ENCODE measurements at regions of chr1 and their contacts with region 1.

Region 1: DNA sequence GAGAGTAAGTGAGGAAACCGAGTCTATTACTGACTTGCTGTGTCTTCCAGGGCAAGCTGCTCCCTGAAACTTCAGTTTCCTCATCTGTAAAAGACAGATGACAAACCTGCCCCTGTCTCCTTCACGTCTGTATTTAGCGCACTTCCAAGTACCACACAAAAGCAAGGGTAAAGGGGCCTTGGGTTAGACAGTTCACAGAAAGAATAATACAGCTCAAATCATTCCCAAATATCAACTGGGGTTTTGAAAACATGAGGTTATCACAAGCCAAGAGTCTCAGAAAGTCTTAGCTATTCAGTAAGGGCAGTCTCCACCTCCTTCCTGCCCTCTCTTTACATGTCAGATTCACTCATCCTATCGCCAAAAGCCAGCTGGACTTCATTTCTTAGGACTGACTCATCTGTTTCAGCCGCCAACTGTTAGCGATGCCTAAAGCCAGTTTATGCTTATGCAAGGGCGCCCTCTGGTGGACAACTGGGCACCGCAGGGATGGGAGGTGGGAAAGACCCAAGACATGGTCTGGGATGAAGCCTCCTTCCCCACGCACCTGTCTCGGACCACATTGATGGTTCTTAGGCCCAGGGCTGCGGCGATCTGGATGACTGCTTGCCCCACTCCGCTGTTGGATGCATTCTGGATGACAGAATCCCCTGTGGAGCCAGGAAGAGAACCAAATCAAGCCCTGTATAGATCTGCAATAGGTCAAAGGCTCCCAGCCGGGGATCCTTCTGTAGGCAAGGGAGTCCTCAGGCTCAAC is 21.1 kb upstream of the SRSF4 start:
- DNase-seq: peak; percentile 95 to 99
- ATAC-seq: peak; percentile 96
- H3K4me3 ChIP-seq: no peak overlapping the region
- H3K27ac ChIP-seq: peak overlapping the region; percentile 80 to 88
- H3K4me1 ChIP-seq: no peaks in the 10 kb centered on the region
- H3K27me3 ChIP-seq: no peaks in the 10 kb centered on the region

Region 2: GRCh38 chr1:28789412-28789811 is 413.4 kb before region 1 on chr1:
- intact Hi-C with region 1: loop called (anchors 5 to 10 kb)
- DNase-seq: no peak
- ATAC-seq: no peak
- H3K4me3 ChIP-seq: no peak overlapping the region
- H3K27ac ChIP-seq: no peak overlapping the region
- H3K4me1 ChIP-seq: no peaks in the 10 kb centered on the region
- H3K27me3 ChIP-seq: no peaks in the 10 kb centered on the region

Region 3: DNA sequence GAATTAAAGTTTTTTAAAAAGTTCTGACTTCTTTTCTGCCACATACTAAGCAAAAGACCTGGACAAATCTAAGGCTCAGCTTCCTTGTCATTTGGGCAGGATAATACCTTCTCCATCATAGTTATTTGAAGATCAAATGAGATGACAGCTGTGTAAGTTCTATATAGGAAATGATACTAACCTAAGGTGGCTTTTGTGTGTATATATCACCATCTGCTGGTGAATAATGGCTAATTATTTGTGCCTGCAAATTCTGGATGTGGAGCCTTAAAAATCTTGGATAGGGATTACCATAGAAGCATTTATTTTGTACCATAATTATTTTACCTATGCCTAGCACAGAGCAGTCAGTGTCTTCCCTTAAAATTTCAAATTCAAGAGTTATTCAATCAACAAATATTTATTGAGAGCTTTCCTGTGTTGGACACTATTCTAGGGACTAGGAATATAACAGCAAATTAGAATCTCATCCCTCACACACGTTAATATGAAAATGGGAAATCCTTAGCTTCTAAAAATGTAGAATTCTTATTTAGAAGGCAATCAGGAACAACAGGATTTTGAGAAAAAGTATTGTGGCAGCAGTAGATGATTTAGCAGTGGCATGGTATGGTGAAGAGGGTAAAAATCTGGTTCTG is 168.8 kb before region 1 on chr1:
- intact Hi-C with region 1: loop called (anchors 5 kb)
- DNase-seq: no peak
- ATAC-seq: no peak
- H3K4me3 ChIP-seq: no peak overlapping the region
- H3K27ac ChIP-seq: no peak overlapping the region
- H3K4me1 ChIP-seq: no peaks in the 10 kb centered on the region
- H3K27me3 ChIP-seq: no peaks in the 10 kb centered on the region

Region 4: GRCh38 chr1:29124366-29125236 is 78.2 kb before region 1 on chr1:
- intact Hi-C with region 1: loop called in 1 of 2 experiments (anchors 5 kb)
- DNase-seq: peak; percentile 89 to 96
- ATAC-seq: peak; percentile 89
- H3K4me3 ChIP-seq: peak overlapping the region; percentile 56 to 61
- H3K27ac ChIP-seq: peak overlapping the region; percentile 89 to 99
- H3K4me1 ChIP-seq: no peaks in the 10 kb centered on the region
- H3K27me3 ChIP-seq: no peaks in the 10 kb centered on the region

Region 5: GRCh38 chr1:29156543-29157268 is 46.1 kb before region 1 on chr1:
- intact Hi-C with region 1: no loop called
- DNase-seq: no peak
- ATAC-seq: no peak
- H3K4me3 ChIP-seq: no peak overlapping the region
- H3K27ac ChIP-seq: no peak overlapping the region
- H3K4me1 ChIP-seq: no peaks in the 10 kb centered on the region
- H3K27me3 ChIP-seq: no peaks in the 10 kb centered on the region

Region 6: GRCh38 chr1:29171089-29171488 is 31.7 kb before region 1 on chr1:
- intact Hi-C with region 1: no loop called
- DNase-seq: no peak
- ATAC-seq: no peak
- H3K4me3 ChIP-seq: no peak overlapping the region
- H3K27ac ChIP-seq: no peak overlapping the region
- H3K4me1 ChIP-seq: peaks cover 3% of the 10 kb centered on the region in 2 donors
- H3K27me3 ChIP-seq: no peaks in the 10 kb centered on the region